Heart right ventricle (tissue), 16 donors: ENCODE measurements at regions of chr11 and their contacts with region 1.

Region 1: GRCh38 chr11:67656278-67656922 is 5.9 kb upstream of the ACY3 start:
- DNase-seq: no peak
- ATAC-seq: no peak
- H3K4me3 ChIP-seq: no peak overlapping the region
- H3K27ac ChIP-seq: no peak overlapping the region
- H3K4me1 ChIP-seq: peaks cover 0 to 9% (median 0%) of the 10 kb centered on the region in 9 donors
- H3K27me3 ChIP-seq: no peaks in the 10 kb centered on the region
- CTCF ChIP-seq: no peak

Region 2: GRCh38 chr11:67558084-67558781 is 98.2 kb before region 1 on chr11:
- intact Hi-C with region 1: no loop called
- DNase-seq: peak; percentile 61 to 67
- ATAC-seq: peak; percentile 74 to 96 (median 92)
- H3K4me3 ChIP-seq: peak overlapping the region in 3 of 10 donors; percentile 1 to 14 (median 5)
- H3K27ac ChIP-seq: peak overlapping the region in 9 of 10 donors; percentile 16 to 73 (median 51)
- H3K4me1 ChIP-seq: peaks cover 0 to 19% (median 8%) of the 10 kb centered on the region in 9 donors
- H3K27me3 ChIP-seq: peaks cover 0 to 4% (median 0%) of the 10 kb centered on the region in 7 donors
- CTCF ChIP-seq: no peak

Region 3: DNA sequence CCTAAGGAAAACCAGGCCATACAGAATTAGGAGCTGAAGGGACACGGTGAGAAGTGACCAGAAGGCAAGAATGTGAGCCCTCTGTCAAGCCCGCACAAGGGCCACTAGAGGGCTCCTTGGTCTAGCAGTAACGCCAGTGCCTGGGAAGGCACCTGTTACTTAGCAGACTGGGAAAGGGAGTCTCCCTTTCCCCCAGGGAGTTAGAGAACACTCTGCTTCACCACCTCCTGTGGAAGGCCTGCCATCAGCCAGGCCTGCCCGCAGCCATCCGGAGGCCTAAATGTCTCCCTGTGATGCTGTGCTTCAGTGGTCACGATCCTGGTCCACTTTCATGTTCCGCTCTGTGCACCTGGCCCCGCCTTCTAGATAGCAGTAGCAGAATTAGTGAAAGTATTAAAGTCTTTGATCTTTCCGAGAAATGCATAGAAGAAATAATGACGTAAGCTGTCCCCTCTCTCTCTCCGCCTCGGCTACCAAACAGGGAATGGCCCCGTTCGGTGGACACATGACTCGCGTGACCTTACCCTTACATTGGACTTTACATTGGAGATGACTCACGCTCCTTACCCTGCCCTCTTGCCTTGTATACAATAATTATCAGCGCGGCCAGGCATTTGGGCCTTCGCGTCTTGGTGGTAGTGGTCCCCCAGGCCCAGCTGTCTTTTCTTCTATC is 83.5 kb before region 1 on chr11:
- intact Hi-C with region 1: loop called in 5 of 10 experiments (anchors 5 to 10 kb)
- DNase-seq: peak; percentile 34
- ATAC-seq: peak in 2 of 8 donors; percentile 33 to 52
- H3K4me3 ChIP-seq: no peak overlapping the region
- H3K27ac ChIP-seq: no peak overlapping the region
- H3K4me1 ChIP-seq: no peaks in the 10 kb centered on the region
- H3K27me3 ChIP-seq: peaks cover 0 to 24% (median 7%) of the 10 kb centered on the region in 7 donors
- CTCF ChIP-seq: peak; percentile 47 to 86 (median 76)

Region 4: DNA sequence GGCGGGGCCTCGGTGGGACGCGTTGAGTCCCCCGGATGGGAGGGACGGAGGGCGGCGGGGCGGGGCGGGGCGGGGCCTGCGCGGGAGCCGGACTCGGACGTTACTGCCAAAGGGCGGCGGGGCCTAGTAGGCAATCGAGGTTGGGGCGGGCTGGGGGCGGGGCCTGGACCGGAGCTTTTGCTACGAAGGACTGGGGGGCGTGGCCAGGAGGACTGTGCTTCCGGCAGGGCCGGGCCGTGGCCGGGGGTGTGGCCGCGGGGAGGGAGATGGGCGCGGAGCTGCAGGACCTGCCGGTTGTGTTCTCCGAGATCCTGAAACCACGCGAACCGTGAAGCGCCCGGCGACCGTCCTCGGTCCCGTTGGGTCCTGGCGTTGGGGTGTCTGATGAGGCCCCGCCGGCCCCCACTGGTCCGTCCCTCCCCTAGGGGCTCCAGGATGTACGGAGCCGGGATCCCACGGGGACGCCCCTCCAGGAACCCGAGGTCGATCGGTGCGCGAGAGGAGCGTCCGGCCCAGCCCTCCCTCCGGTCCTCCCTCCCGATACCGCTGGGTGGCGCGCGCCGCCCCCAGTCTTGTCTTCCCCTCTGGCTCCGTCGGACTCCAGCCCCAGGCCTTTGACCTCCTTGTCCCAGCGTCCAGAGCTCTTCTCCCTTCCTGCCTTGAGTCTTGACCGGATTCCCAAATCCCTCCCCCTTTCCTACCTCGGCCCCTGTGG is 26.0 kb before region 1 on chr11:
- intact Hi-C with region 1: loop called in 3 of 10 experiments (anchors 2 kb)
- DNase-seq: peak; percentile 98 to 99
- ATAC-seq: peak; percentile 87 to 95 (median 92)
- H3K4me3 ChIP-seq: peak overlapping the region; percentile 16 to 80 (median 64)
- H3K27ac ChIP-seq: peak overlapping the region; percentile 16 to 98 (median 92)
- H3K4me1 ChIP-seq: peaks cover 0 to 30% (median 19%) of the 10 kb centered on the region in 9 donors
- H3K27me3 ChIP-seq: no peaks in the 10 kb centered on the region
- CTCF ChIP-seq: peak; percentile 21 to 85 (median 77)

Region 5: DNA sequence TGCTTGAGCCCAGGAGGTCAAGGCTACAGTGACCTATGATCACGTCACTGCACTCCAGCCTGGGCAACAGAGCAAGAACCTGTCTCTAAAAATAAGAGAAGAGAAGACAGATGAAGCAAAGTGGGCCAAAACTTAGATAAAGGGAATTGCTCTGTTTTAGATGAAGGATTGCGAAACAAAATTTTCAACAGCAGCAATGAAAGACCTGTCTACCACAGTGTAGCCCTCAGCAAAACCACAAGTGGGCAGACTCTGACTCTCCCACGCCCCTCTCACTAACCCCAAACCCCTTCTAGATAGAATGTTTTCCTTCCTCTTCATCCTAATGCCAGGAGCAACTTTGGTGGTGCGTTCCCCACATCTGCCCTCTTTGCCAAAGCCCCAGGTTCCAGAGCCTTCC is 123.7 kb after region 1 on chr11:
- intact Hi-C with region 1: no loop called
- DNase-seq: no peak
- ATAC-seq: no peak
- H3K4me3 ChIP-seq: no peak overlapping the region
- H3K27ac ChIP-seq: no peak overlapping the region
- H3K4me1 ChIP-seq: peaks cover 0 to 4% (median 0%) of the 10 kb centered on the region in 9 donors
- H3K27me3 ChIP-seq: peaks cover 0 to 8% (median 0%) of the 10 kb centered on the region in 7 donors
- CTCF ChIP-seq: no peak